BJ (cell line): ENCODE measurements at regions of chr11 and their contacts with region 1.

Region 1: GRCh38 chr11:32895471-32895870 is 2.9 kb downstream of the QSER1 start:
- DNase-seq: no peak
- H3K4me3 ChIP-seq: no peak overlapping the region
- H3K27me3 ChIP-seq: no peaks in the 10 kb centered on the region
- CTCF ChIP-seq: no peak

Region 2: GRCh38 chr11:32722255-32722654 is 173.2 kb before region 1 on chr11:
- CTCF ChIA-PET with region 1: no interaction called
- POLR2A ChIA-PET with region 1: no interaction called
- DNase-seq: no peak
- H3K4me3 ChIP-seq: no peak overlapping the region
- H3K27me3 ChIP-seq: peaks cover 3% of the 10 kb centered on the region; the same call in 1 of the 2 replicates
- CTCF ChIP-seq: no peak

Region 3: GRCh38 chr11:33052231-33052630 is 156.8 kb after region 1 on chr11:
- CTCF ChIA-PET with region 1: no interaction called
- POLR2A ChIA-PET with region 1: interaction called, 13 read pairs
- DNase-seq: no peak
- H3K4me3 ChIP-seq: no peak overlapping the region
- H3K27me3 ChIP-seq: no peaks in the 10 kb centered on the region
- CTCF ChIP-seq: no peak